Activated B cell treated with CpG ODN at 0.5 μM for 24 hours (primary cell): ENCODE measurements at regions of chr2 and their contacts with region 1.

Region 1: DNA sequence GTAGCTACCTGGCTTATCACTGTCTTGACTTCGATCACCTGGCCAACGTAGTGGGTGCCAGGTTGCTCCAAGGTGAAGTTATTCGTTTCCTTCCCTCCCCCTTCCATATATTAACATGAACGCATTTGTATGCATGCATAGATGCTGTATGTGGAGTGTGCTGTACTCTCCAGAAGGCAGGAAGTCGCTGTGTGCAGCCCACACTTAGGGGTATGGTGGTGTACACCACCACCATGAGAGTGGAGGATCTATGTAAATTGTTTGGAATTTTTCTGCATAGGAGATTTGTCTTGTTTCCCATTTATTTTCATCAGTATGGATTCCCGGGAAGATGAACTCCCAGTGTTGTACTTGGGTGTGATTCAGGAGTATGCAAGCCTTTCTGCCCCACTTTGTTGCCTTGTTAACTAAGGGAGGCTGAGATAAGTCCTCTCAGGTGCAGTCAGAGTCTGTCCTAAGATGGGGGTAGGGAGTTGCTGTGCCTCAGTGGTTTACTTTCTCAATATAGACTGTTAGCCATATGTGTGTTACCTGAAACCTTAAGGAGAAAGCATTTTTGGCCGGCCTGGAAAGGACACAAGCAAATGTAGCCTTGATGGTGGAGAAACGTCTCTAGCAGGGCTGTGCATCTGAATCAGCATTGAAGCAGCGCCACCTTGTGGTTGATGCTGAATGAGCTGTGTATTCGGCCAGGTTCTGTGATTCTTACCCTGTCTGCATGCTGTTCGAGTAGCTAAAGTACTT is 149.8 kb downstream of the TANC1 start:
- DNase-seq: peak; percentile 31
- ATAC-seq: peak; percentile 71
- H3K4me3 Mint-ChIP-seq: no peak overlapping the region
- H3K27ac Mint-ChIP-seq: no peak overlapping the region
- H3K4me1 Mint-ChIP-seq: peaks cover 3% of the 10 kb centered on the region
- H3K27me3 Mint-ChIP-seq: no peaks in the 10 kb centered on the region
- CTCF ChIP-seq: no peak

Region 2: GRCh38 chr2:158024288-158024898 is 1093.9 kb before region 1 on chr2:
- CTCF ChIA-PET with region 1: no interaction called
- POLR2A ChIA-PET with region 1: no interaction called
- intact Hi-C with region 1: loop called (anchors 1 kb)
- DNase-seq: no peak
- ATAC-seq: peak; percentile 54
- H3K4me3 Mint-ChIP-seq: no peak overlapping the region
- H3K27ac Mint-ChIP-seq: no peak overlapping the region
- H3K4me1 Mint-ChIP-seq: no peaks in the 10 kb centered on the region
- H3K27me3 Mint-ChIP-seq: no peaks in the 10 kb centered on the region
- CTCF ChIP-seq: peak; percentile 93

Region 3: DNA sequence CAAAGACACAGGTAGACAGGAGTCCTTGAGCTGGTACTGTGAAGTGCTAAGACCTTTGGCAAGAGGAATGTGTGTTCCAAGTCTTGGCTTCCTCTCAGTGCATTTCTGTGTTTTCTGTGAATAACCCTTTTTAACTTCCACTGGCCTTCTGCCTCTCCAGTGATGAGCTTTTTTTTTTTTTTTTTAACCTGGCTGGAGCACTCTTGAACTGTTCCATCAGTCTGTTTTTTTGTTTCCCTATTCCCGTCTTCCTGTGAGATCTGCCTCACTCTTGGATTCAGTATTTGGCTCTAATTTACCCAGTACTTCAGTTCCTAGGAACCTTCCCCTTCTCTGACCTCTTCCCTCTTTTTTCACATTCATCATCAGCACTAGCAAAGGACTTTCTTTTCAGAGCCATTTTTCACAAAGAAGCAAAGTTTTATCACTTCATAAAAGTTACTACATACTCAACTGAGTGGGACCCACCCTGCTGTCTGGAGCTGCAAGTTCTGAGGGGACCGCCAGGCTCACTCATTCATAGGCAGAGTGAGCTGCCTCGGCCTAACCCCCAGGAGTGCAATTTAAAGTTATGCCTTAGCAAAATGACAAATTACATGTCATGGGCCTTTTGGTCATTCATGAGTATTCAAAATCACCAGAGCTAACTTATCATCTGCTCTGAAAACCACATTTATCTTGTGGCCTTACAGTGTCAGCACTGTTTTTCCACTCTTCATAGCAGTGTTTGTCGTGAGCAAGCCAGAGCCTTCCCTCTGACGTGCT is 450.1 kb before region 1 on chr2:
- CTCF ChIA-PET with region 1: no interaction called
- POLR2A ChIA-PET with region 1: no interaction called
- intact Hi-C with region 1: no loop called
- DNase-seq: no peak
- ATAC-seq: no peak
- H3K4me3 Mint-ChIP-seq: no peak overlapping the region
- H3K27ac Mint-ChIP-seq: no peak overlapping the region
- H3K4me1 Mint-ChIP-seq: no peaks in the 10 kb centered on the region
- H3K27me3 Mint-ChIP-seq: no peaks in the 10 kb centered on the region
- CTCF ChIP-seq: no peak

Region 4: GRCh38 chr2:159035790-159036411 is 82.4 kb before region 1 on chr2:
- CTCF ChIA-PET with region 1: interaction called, 5 read pairs
- POLR2A ChIA-PET with region 1: no interaction called
- intact Hi-C with region 1: loop called (anchors 1 kb)
- DNase-seq: no peak
- ATAC-seq: no peak
- H3K4me3 Mint-ChIP-seq: no peak overlapping the region
- H3K27ac Mint-ChIP-seq: no peak overlapping the region
- H3K4me1 Mint-ChIP-seq: no peaks in the 10 kb centered on the region
- H3K27me3 Mint-ChIP-seq: no peaks in the 10 kb centered on the region
- CTCF ChIP-seq: no peak

Region 5: DNA sequence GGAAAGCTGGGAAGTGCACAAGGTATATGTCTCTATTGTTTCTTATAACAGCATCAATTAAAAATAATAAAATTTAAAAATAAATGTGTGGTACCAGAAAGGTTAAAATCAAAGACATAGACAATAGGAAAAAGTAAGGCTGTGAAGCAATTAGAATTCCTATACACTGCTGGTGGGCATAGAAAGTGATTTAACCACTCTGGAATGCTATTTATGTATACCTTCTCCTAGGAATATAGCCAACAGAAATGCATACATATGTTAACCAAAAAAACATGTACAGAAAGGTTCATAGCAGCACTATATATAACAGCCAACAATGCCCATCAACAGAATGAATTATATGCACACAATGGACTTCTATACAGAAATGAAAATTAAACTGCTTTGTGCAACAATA is 125.2 kb after region 1 on chr2:
- CTCF ChIA-PET with region 1: no interaction called
- POLR2A ChIA-PET with region 1: no interaction called
- intact Hi-C with region 1: no loop called
- DNase-seq: no peak
- ATAC-seq: no peak
- H3K4me3 Mint-ChIP-seq: no peak overlapping the region
- H3K27ac Mint-ChIP-seq: no peak overlapping the region
- H3K4me1 Mint-ChIP-seq: no peaks in the 10 kb centered on the region
- H3K27me3 Mint-ChIP-seq: no peaks in the 10 kb centered on the region
- CTCF ChIP-seq: no peak

Region 6: GRCh38 chr2:159968279-159968900 is 850.1 kb after region 1 on chr2:
- CTCF ChIA-PET with region 1: no interaction called
- POLR2A ChIA-PET with region 1: no interaction called
- intact Hi-C with region 1: loop called (anchors 5 kb)
- DNase-seq: no peak
- ATAC-seq: no peak
- H3K4me3 Mint-ChIP-seq: no peak overlapping the region
- H3K27ac Mint-ChIP-seq: no peak overlapping the region
- H3K4me1 Mint-ChIP-seq: peaks cover 9% of the 10 kb centered on the region
- H3K27me3 Mint-ChIP-seq: no peaks in the 10 kb centered on the region
- CTCF ChIP-seq: no peak